K562 (cell line): ENCODE measurements at regions of chr16 and their contacts with region 1.

Region 1: DNA sequence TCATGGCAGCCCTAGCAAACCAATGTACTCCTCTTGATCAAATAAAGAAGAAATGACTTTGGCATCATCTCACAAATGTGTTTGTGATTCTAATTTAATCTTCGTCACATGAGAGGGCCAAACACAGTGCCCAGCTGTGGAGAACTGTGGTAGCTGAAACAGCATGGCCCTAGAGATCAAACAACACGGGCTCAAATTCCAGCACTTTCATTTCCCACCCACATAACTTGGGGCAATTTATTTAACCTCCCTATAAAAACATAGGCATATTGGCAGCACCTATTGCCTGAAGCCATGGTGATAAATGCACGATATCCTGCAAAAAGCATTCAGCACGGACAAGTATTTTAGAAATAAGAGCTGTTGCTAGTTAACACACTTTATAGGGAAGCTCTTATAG is 2.5 kb downstream of the ACSM1 start:
- DNase-seq: no peak
- ATAC-seq: no peak
- H3K4me3 ChIP-seq: no peak overlapping the region
- H3K27ac ChIP-seq: no peak overlapping the region
- H3K4me1 ChIP-seq: peaks cover 0 to 10% of the 10 kb centered on the region in 2 experiments; a peak in 2 of 5 replicates
- H3K27me3 ChIP-seq: no peaks in the 10 kb centered on the region
- CTCF ChIP-seq: no peak
- EP300 ChIP-seq: no peak
- POLR2A ChIP-seq: no peak
- RAD21 ChIP-seq: no peak

Region 2: GRCh38 chr16:20598832-20599469 is 96.1 kb before region 1 on chr16:
- CTCF ChIA-PET with region 1: interaction called, 7 read pairs
- POLR2A ChIA-PET with region 1: no interaction called
- in situ Hi-C with region 1: no loop called
- intact Hi-C with region 1: loop called (anchors 1 kb)
- DNase-seq: peak in 1 of 4 experiments; percentile 17
- ATAC-seq: peak; percentile 45; the same call in 1 of the 3 replicates
- H3K4me3 ChIP-seq: no peak overlapping the region
- H3K27ac ChIP-seq: no peak overlapping the region
- H3K4me1 ChIP-seq: no peaks in the 10 kb centered on the region
- H3K27me3 ChIP-seq: no peaks in the 10 kb centered on the region
- CTCF ChIP-seq: no peak
- EP300 ChIP-seq: no peak
- POLR2A ChIP-seq: no peak
- RAD21 ChIP-seq: no peak

Region 3: DNA sequence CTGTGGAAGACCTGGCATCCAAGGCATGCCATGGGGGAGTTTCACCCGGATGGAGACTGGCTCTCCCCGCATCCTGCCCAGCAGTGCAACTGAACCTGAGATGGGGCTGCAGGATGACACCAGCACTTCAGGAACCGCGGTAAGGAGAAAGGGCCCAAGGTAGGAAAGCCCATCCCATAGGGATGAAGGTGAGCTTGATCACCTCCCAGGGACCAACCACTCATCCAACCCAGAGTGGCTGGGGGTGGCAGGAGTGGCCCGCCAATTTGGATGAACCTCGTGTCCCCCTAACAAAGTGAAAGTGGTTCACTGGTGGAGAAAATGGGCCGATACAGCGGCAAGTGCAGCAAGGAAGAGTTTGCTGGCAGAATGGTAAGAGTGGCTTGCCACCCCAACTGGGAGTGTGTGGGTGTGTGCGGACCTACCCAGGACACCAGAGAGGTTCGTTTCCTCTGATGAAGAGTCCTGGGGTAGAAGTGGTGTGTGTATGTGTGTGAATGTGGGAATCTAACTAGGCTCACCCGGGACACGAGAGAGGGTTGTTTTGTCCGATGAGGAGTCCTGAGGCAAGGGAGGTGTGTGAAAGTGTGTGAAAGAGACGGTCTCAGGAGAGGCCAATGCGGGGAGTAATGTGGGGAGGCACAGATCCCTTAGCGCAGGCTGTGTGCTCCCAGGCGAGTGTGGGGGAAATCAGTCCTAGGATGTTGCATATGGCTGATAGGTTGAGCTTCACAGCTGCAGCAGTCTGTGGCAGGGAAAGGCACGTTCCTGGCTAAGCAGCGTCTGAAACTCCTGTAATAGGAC is 20.1 kb before region 1 on chr16:
- CTCF ChIA-PET with region 1: no interaction called
- POLR2A ChIA-PET with region 1: interaction called, 4 read pairs
- in situ Hi-C with region 1: no loop called
- intact Hi-C with region 1: loop called (anchors 1 kb)
- DNase-seq: peak in 2 of 4 experiments; percentile 23 to 54
- ATAC-seq: peak; percentile 66
- H3K4me3 ChIP-seq: peak overlapping the region; percentile 51
- H3K27ac ChIP-seq: peak overlapping the region; percentile 92
- H3K4me1 ChIP-seq: peaks cover 10 to 34% of the 10 kb centered on the region in 2 experiments
- H3K27me3 ChIP-seq: no peaks in the 10 kb centered on the region
- CTCF ChIP-seq: no peak
- EP300 ChIP-seq: no peak
- POLR2A ChIP-seq: no peak
- RAD21 ChIP-seq: no peak